H1 (cell line): ENCODE measurements at regions of chr5 and their contacts with region 1.

Region 1: GRCh38 chr5:167049043-167049663 is 1242.3 kb upstream of the WWC1 start:
- DNase-seq: no peak
- H3K4me3 ChIP-seq: no peak overlapping the region
- H3K27ac ChIP-seq: no peak overlapping the region
- H3K4me1 ChIP-seq: peaks cover 0 to 6% (median 1%) of the 10 kb centered on the region in 4 experiments; a peak in 3 of 7 replicates
- H3K27me3 ChIP-seq: no peaks in the 10 kb centered on the region
- CTCF ChIP-seq: peak in 2 of 3 experiments; percentile 52 to 73; a peak in 3 of 4 replicates
- EP300 ChIP-seq: no peak
- POLR2A ChIP-seq: no peak
- RAD21 ChIP-seq: peak; percentile 67 to 73

Region 2: DNA sequence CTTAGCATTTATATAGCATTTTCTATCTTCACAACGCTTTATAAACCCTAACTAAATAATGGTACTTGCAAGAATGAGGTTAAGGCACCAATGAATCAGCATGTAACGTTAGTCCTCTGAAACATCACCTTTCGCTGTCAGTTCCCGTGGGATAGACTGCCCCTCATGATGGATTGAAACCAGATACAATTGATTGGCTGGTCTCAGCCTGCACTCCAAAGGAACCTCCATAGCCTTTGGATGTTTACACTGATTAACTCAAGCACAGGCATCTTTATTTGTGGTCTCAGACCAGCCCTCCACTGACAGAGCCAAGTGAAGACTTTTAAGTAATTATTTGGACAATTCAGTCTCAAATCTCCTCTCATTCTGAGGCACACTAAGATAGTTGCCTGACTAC is 97.1 kb before region 1 on chr5:
- CTCF ChIA-PET with region 1: no interaction called
- POLR2A ChIA-PET with region 1: no interaction called
- DNase-seq: no peak
- H3K4me3 ChIP-seq: no peak overlapping the region
- H3K27ac ChIP-seq: no peak overlapping the region
- H3K4me1 ChIP-seq: peaks cover 0 to 4% (median under 1%) of the 10 kb centered on the region in 4 experiments; a peak in 2 of 7 replicates
- H3K27me3 ChIP-seq: no peaks in the 10 kb centered on the region
- CTCF ChIP-seq: no peak
- EP300 ChIP-seq: no peak
- POLR2A ChIP-seq: no peak
- RAD21 ChIP-seq: no peak

Region 3: GRCh38 chr5:166979307-166979895 is 69.8 kb before region 1 on chr5:
- CTCF ChIA-PET with region 1: interaction called, 10 read pairs
- POLR2A ChIA-PET with region 1: no interaction called
- DNase-seq: no peak
- H3K4me3 ChIP-seq: peak overlapping the region; percentile 65 to 74 (median 70)
- H3K27ac ChIP-seq: no peak overlapping the region
- H3K4me1 ChIP-seq: peaks cover 0 to 11% (median 5%) of the 10 kb centered on the region in 4 experiments; a peak in 2 of 7 replicates
- H3K27me3 ChIP-seq: peaks cover 0 to 8% (median 1%) of the 10 kb centered on the region in 4 experiments; a peak in 3 of 7 replicates
- CTCF ChIP-seq: no peak
- EP300 ChIP-seq: no peak
- POLR2A ChIP-seq: no peak
- RAD21 ChIP-seq: no peak

Region 4: GRCh38 chr5:167030500-167031120 is 18.5 kb before region 1 on chr5:
- CTCF ChIA-PET with region 1: interaction called, 67 read pairs
- POLR2A ChIA-PET with region 1: no interaction called
- DNase-seq: peak; percentile 64 to 88
- H3K4me3 ChIP-seq: no peak overlapping the region
- H3K27ac ChIP-seq: no peak overlapping the region
- H3K4me1 ChIP-seq: no peaks in the 10 kb centered on the region
- H3K27me3 ChIP-seq: no peaks in the 10 kb centered on the region
- CTCF ChIP-seq: peak; percentile 39 to 88 (median 70)
- EP300 ChIP-seq: no peak
- POLR2A ChIP-seq: no peak
- RAD21 ChIP-seq: peak; percentile 82 to 83

Region 5: GRCh38 chr5:167071981-167072610 is 22.9 kb after region 1 on chr5:
- CTCF ChIA-PET with region 1: interaction called, 24 read pairs
- POLR2A ChIA-PET with region 1: no interaction called
- DNase-seq: no peak
- H3K4me3 ChIP-seq: no peak overlapping the region
- H3K27ac ChIP-seq: no peak overlapping the region
- H3K4me1 ChIP-seq: no peaks in the 10 kb centered on the region
- H3K27me3 ChIP-seq: no peaks in the 10 kb centered on the region
- CTCF ChIP-seq: no peak
- EP300 ChIP-seq: no peak
- POLR2A ChIP-seq: no peak
- RAD21 ChIP-seq: no peak

Region 6: GRCh38 chr5:167244583-167244982 is 195.4 kb after region 1 on chr5:
- CTCF ChIA-PET with region 1: interaction called, 34 read pairs
- POLR2A ChIA-PET with region 1: no interaction called
- DNase-seq: peak; percentile 34 to 65
- H3K4me3 ChIP-seq: no peak overlapping the region
- H3K27ac ChIP-seq: no peak overlapping the region
- H3K4me1 ChIP-seq: no peaks in the 10 kb centered on the region; a peak in 1 of 7 replicates
- H3K27me3 ChIP-seq: no peaks in the 10 kb centered on the region
- CTCF ChIP-seq: peak; percentile 52 to 81 (median 75)
- EP300 ChIP-seq: no peak
- POLR2A ChIP-seq: no peak
- RAD21 ChIP-seq: peak; percentile 94 to 95